Activated CD8-positive, alpha-beta memory T cell treated with anti-CD3 and anti-CD28 coated beads, Interleukin-2, amount 10 ng/mL, durations not matched to agents 7 days and 5 days (primary cell): ENCODE measurements at regions of chr17 and their contacts with region 1.

Region 1: DNA sequence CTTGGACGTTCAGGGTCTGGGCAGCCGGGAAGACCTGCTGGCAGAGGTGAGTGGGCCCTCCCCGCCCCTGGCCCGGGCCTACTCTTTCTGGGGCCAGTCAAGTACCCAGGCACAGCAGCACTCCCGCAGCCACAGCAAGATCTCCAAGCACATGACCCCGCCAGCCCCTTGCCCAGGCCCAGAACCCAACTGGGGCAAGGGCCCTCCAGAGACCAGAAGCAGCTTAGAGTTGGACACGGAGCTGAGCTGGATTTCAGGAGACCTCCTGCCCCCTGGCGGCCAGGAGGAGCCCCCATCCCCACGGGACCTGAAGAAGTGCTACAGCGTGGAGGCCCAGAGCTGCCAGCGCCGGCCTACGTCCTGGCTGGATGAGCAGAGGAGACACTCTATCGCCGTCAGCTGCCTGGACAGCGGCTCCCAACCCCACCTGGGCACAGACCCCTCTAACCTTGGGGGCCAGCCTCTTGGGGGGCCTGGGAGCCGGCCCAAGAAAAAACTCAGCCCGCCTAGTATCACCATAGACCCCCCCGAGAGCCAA is 8.6 kb upstream of the ABCC3 start:
- DNase-seq: peak; percentile 70
- ATAC-seq: peak; percentile 75
- H3K4me3 Mint-ChIP-seq: no peak overlapping the region
- H3K27ac Mint-ChIP-seq: no peak overlapping the region
- H3K4me1 Mint-ChIP-seq: peaks cover 7% of the 10 kb centered on the region
- H3K27me3 Mint-ChIP-seq: peaks cover 35% of the 10 kb centered on the region

Region 2: DNA sequence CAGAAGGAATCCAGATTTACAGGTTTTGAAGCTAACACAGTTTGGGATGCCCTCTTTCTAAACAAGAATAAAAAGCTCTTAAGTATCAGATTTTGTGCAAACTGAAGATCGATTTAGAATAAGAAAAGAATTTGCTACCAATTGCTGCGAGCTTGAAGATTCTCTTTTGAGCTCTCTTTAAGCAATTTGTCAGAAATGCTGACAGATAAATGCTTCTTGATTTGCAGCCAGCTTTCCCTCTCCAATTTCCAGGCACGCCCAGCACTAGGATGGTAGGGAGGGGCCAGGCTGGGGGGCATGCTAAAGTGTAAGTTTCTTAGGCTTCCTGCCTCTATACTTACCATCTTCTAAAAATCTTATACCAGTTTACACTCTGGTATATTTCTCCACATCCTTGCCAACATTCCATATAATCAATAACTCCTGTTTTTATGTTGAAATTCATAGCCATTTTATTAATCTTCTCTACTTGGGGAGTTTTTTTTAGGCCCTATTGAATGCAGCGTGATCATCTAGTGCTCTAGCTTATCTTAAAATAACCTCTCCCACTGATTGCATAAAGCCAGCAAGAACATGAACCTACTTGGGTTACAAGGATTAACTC is 182.6 kb before region 1 on chr17:
- CTCF ChIA-PET with region 1: no interaction called
- DNase-seq: no peak
- ATAC-seq: no peak
- H3K4me3 Mint-ChIP-seq: no peak overlapping the region
- H3K27ac Mint-ChIP-seq: no peak overlapping the region
- H3K4me1 Mint-ChIP-seq: no peaks in the 10 kb centered on the region
- H3K27me3 Mint-ChIP-seq: no peaks in the 10 kb centered on the region

Region 3: DNA sequence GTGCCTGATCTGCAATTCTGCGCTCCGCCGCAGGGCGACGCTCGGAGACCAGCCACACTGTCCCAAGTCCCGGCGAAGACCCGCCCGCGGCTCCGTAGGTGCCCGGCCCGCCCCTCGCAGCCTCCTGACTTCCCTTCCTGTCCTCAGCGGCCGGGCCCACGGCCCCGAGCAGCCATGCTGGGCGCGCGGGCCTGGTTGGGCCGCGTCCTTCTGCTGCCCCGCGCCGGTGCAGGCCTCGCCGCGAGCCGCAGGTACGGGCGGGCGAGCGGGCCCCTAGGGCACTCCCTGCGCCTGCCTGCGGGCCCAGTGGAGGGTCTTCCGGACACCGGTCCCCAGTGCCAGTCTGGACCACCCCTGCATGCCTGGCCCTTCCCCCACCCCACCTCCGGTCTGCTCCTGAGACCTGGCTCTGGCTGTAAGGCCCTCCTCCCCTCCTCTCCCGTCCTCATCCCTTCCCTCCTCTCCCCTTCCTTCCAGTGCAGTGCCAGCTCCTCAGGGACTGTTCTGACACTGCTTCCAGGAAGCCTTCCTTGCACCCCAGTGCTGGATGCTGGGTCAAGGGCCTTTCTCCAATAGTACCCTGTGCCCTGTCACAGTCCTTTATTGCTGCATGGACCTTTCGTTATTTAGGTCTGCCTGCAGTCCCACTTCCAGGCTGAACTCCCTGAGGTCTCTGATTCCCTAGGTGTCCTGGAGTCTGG is 78.9 kb before region 1 on chr17 and contains the start of gene SPATA20:
- CTCF ChIA-PET with region 1: interaction called, 20 read pairs
- DNase-seq: peak; percentile 94
- ATAC-seq: peak; percentile 94
- H3K4me3 Mint-ChIP-seq: peak within 1 kb of the TSS; percentile 75
- H3K27ac Mint-ChIP-seq: peak within 1 kb of the TSS; percentile 76
- H3K4me1 Mint-ChIP-seq: peaks cover 15% of the 10 kb centered on the region
- H3K27me3 Mint-ChIP-seq: peaks cover 9% of the 10 kb centered on the region
- total RNA-seq, gene SPATA20: 29.9 to 35.2 TPM

Region 4: DNA sequence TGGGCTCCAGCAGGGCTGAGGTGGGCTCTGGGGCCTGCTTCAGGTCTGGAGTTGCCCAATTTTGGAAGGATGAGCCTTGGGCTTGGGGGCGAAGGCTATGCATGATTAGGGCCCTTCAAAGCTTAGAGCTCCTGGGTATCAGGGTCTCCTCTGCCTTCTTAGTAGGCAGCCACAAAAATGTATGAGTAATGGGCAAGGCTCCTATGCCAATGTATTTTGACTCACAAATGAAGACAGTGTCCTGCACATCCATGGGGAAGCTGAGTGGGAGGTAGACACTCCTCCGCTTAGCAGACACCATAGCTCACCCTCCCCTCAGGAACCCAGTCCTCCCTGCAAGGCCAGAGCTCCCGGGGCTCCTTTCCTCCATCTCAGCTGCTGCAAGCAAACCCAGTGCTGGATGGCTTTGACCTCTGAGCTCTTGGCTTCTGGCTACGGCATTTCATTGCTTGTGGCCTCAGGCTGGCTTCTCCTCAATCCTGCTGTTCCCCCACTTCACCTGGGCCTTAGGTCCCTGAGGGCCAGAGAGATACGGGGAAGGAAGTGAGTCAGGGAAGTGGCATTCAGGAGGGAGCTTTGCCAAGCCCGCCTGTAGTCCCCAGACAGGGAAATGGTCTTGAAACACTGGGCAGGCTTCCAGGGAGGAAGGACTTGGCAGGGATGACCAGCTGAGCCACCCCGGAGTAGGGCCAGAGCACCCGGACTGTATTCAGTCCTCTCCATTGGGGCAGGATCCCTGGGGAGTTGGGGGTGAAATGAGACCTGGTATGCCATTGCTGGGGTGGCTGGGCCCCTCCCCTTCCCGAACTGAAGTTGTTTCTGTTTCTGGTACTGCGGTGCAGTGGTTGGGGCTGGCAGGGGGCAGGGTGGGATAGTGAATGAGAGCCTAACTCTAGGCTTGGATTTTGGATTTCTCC is 13.0 kb after region 1 on chr17:
- CTCF ChIA-PET with region 1: interaction called, 15 read pairs
- DNase-seq: no peak
- ATAC-seq: no peak
- H3K4me3 Mint-ChIP-seq: no peak overlapping the region
- H3K27ac Mint-ChIP-seq: no peak overlapping the region
- H3K4me1 Mint-ChIP-seq: no peaks in the 10 kb centered on the region
- H3K27me3 Mint-ChIP-seq: peaks cover 42% of the 10 kb centered on the region

Region 5: GRCh38 chr17:50693036-50693682 is 67.1 kb after region 1 on chr17:
- CTCF ChIA-PET with region 1: interaction called, 15 read pairs
- DNase-seq: no peak
- ATAC-seq: no peak
- H3K4me3 Mint-ChIP-seq: no peak overlapping the region
- H3K27ac Mint-ChIP-seq: no peak overlapping the region
- H3K4me1 Mint-ChIP-seq: peaks cover 13% of the 10 kb centered on the region
- H3K27me3 Mint-ChIP-seq: no peaks in the 10 kb centered on the region